Activated CD4-positive, alpha-beta T cell treated with anti-CD3 and anti-CD28 coated beads for 36 hours (primary cell): ENCODE measurements at regions of chr20 and their contacts with region 1.

Region 1: DNA sequence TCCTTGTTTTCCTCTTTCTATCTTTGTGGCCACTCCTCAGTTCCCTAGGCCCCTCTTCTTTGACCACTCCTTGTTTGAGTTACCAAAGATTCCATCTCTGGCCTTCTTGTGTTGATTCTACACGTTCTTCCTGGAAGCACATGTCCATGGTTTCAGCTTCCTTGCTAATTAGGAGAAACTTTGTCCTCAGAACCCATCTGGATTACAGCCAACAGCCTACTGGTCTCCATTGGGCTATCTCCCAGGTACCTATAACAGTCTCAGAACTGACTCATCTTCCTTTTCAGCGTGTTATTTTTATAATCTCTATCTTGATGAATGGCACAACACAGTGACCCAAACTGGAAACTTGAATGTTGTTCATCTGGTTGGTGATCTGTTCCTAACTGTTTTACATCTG is 17.5 kb downstream of the PTPRA start:
- DNase-seq: no peak
- ATAC-seq: peak; percentile 39
- H3K4me3 Mint-ChIP-seq: no peak overlapping the region
- H3K27ac Mint-ChIP-seq: peak overlapping the region; percentile 59
- H3K4me1 Mint-ChIP-seq: peaks cover 45% of the 10 kb centered on the region
- H3K27me3 Mint-ChIP-seq: no peaks in the 10 kb centered on the region

Region 2: DNA sequence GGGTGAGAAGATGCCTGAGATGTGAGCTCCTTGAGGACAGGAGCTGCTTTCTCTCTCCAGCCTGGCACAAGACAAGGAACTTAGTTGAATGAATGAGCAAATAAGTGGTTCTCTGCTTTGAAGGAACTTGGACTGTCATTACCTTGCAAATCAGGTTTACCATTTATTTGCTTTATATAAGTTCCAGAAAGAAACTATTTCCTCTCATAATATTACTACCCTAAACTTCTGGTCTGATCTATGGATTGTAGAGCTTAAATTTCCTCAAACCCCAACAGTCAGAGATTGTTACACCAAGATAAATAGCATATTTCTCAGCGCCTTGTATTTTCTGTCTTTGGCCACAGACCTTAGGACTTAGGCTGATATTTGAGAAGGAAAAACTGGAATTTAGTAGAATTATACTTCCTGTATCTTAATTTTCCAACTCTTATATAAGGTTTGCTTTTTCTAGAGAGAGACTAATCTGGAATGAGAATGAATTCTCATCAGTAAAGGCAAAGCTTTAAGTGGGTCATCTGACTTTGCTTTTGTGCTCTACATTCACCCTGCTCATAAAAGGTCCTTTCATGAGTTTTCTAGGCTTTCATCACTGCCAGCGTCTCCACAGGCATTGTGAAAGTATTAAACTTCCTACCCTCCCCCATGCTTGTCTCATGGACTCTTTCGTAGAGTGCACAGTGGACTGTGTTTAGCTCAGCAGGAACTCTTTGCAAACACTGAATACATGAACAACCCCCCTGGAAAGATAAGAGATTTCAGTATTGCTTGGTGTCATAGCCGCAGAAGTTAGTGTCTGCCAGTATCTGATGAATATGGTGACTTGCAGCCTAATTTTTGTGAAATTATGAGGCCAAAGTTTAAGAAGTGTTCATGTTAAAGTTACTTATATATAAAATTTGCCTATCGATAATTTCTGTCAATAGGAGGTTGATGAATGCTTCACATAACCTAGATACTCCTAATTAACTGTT is 56.5 kb after region 1 on chr20:
- CTCF ChIA-PET with region 1: no interaction called
- POLR2A ChIA-PET with region 1: no interaction called
- intact Hi-C with region 1: loop called in 1 of 2 experiments (anchors 10 kb)
- DNase-seq: no peak
- ATAC-seq: peak; percentile 60
- H3K4me3 Mint-ChIP-seq: no peak overlapping the region
- H3K27ac Mint-ChIP-seq: no peak overlapping the region
- H3K4me1 Mint-ChIP-seq: peaks cover 13% of the 10 kb centered on the region
- H3K27me3 Mint-ChIP-seq: no peaks in the 10 kb centered on the region

Region 3: GRCh38 chr20:3135507-3136070 is 244.8 kb after region 1 on chr20:
- CTCF ChIA-PET with region 1: no interaction called
- POLR2A ChIA-PET with region 1: no interaction called
- intact Hi-C with region 1: no loop called
- DNase-seq: no peak
- ATAC-seq: peak; percentile 79
- H3K4me3 Mint-ChIP-seq: no peak overlapping the region
- H3K27ac Mint-ChIP-seq: no peak overlapping the region
- H3K4me1 Mint-ChIP-seq: peaks cover 17% of the 10 kb centered on the region
- H3K27me3 Mint-ChIP-seq: no peaks in the 10 kb centered on the region

Region 4: GRCh38 chr20:3532089-3532615 is 641.4 kb after region 1 on chr20:
- CTCF ChIA-PET with region 1: no interaction called
- POLR2A ChIA-PET with region 1: no interaction called
- intact Hi-C with region 1: no loop called
- DNase-seq: no peak
- ATAC-seq: no peak
- H3K4me3 Mint-ChIP-seq: no peak overlapping the region
- H3K27ac Mint-ChIP-seq: no peak overlapping the region
- H3K4me1 Mint-ChIP-seq: no peaks in the 10 kb centered on the region
- H3K27me3 Mint-ChIP-seq: no peaks in the 10 kb centered on the region